Endothelial cell of umbilical vein (primary cell): ENCODE measurements at regions of chr5 and their contacts with region 1.

Region 1: DNA sequence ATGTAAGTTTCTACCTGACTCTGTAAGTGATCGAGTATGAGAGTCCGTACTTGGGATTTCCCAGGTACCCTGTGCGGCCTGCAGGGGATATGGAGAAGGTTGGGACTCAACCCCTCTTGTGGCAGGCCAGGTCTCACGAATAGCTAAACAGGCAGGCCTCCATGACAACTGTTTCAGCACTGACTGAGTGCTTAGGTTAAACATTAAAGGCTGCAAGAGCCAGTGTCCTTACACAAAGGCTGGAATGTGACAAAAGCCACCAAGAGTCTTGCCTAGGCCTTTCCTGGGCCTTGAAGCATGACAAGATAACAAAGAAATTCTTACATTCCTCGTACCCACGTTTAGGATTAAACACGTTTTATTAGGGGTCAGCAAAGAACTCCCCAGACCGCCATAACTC is 58.6 kb downstream of the THBS4 start:
- DNase-seq: no peak
- H3K4me3 ChIP-seq: no peak overlapping the region
- H3K27ac ChIP-seq: no peak overlapping the region
- H3K4me1 ChIP-seq: no peaks in the 10 kb centered on the region
- H3K27me3 ChIP-seq: no peaks in the 10 kb centered on the region
- CTCF ChIP-seq: no peak
- POLR2A ChIP-seq: no peak

Region 2: DNA sequence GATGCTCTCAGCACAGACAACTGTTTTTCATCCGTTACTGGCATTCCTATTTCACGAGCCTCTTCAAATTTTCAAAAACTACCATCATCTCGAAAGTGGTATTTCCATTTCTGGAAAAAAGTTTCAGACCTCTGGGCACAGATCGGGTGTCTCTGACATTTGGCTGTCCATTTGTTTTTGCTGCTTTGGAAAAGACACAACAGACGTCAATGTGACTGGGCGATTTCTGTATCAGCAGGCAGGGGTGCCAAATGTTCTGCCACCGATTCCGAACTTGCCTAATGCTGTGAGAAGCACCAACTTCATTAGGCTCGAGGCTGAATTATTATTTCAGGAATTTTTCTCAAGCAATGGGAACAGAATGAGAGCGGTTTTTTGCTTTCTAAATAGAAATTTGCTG is 1214.3 kb before region 1 on chr5:
- CTCF ChIA-PET with region 1: no interaction called
- POLR2A ChIA-PET with region 1: no interaction called
- dilution Hi-C with region 1: no loop called
- intact Hi-C with region 1: no loop called
- DNase-seq: no peak
- H3K4me3 ChIP-seq: no peak overlapping the region
- H3K27ac ChIP-seq: no peak overlapping the region
- H3K4me1 ChIP-seq: no peaks in the 10 kb centered on the region
- H3K27me3 ChIP-seq: no peaks in the 10 kb centered on the region
- CTCF ChIP-seq: no peak
- POLR2A ChIP-seq: no peak

Region 3: DNA sequence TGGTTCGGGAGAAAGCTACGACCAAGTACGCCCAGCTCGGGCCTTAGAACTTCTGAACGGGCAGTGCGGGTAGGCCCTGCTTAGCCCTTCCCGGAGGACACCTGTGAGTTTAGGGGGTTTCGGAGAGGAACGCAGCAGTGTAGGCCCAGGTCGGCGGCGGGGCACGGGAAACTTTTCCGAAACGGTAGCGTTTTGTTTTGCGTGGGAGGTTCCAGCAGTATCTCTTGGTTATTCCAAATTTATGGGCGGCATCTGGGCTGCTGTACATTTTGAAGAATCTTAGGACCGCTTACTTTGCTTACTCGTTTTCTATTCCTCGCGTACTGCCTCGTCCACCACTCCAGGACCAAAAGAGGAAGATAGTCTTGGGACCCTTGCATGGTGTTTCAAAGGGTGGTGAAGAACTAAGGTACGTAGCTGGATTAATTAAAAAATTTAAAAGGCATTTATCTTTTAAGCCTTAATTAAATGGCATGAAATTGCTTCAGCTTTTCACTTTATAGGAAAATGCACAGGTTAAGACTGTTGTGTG is 481.1 kb before region 1 on chr5:
- CTCF ChIA-PET with region 1: no interaction called
- POLR2A ChIA-PET with region 1: no interaction called
- dilution Hi-C with region 1: no loop called
- intact Hi-C with region 1: no loop called
- DNase-seq: no peak
- H3K4me3 ChIP-seq: peak overlapping the region; percentile 70 to 95 (median 95)
- H3K27ac ChIP-seq: peak overlapping the region; percentile 64
- H3K4me1 ChIP-seq: peaks cover 5% of the 10 kb centered on the region
- H3K27me3 ChIP-seq: no peaks in the 10 kb centered on the region
- CTCF ChIP-seq: peak in 1 of 2 donors; percentile 1
- POLR2A ChIP-seq: no peak

Region 4: GRCh38 chr5:79712741-79713140 is 381.1 kb before region 1 on chr5:
- CTCF ChIA-PET with region 1: no interaction called
- POLR2A ChIA-PET with region 1: no interaction called
- dilution Hi-C with region 1: no loop called
- intact Hi-C with region 1: no loop called
- DNase-seq: no peak
- H3K4me3 ChIP-seq: no peak overlapping the region
- H3K27ac ChIP-seq: no peak overlapping the region
- H3K4me1 ChIP-seq: no peaks in the 10 kb centered on the region
- H3K27me3 ChIP-seq: no peaks in the 10 kb centered on the region
- CTCF ChIP-seq: no peak
- POLR2A ChIP-seq: no peak

Region 5: DNA sequence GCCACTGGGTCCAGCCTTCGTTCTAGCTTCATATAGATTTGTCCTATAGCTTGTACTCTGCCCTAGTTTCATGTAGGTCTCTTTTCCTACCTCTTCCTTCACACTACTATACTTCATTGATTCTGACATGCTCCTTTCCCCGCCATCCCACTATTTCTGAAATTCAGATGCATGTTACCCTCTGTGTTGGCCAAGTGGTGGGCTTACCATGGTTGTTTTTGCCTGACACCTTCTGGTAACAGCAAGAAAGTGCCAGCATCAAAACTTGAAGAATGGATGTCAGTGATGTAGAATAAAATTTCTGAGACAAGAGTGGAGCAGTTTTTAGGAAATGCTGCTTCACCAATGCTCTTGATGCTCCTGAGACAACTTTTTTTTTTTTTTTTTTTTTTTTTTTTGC is 181.6 kb after region 1 on chr5:
- CTCF ChIA-PET with region 1: interaction called, 41 read pairs
- POLR2A ChIA-PET with region 1: no interaction called
- dilution Hi-C with region 1: no loop called
- intact Hi-C with region 1: loop called (anchors 1 kb)
- DNase-seq: peak; percentile 21
- H3K4me3 ChIP-seq: no peak overlapping the region
- H3K27ac ChIP-seq: no peak overlapping the region
- H3K4me1 ChIP-seq: no peaks in the 10 kb centered on the region
- H3K27me3 ChIP-seq: no peaks in the 10 kb centered on the region
- CTCF ChIP-seq: peak; percentile 4 to 42
- POLR2A ChIP-seq: no peak

Region 6: DNA sequence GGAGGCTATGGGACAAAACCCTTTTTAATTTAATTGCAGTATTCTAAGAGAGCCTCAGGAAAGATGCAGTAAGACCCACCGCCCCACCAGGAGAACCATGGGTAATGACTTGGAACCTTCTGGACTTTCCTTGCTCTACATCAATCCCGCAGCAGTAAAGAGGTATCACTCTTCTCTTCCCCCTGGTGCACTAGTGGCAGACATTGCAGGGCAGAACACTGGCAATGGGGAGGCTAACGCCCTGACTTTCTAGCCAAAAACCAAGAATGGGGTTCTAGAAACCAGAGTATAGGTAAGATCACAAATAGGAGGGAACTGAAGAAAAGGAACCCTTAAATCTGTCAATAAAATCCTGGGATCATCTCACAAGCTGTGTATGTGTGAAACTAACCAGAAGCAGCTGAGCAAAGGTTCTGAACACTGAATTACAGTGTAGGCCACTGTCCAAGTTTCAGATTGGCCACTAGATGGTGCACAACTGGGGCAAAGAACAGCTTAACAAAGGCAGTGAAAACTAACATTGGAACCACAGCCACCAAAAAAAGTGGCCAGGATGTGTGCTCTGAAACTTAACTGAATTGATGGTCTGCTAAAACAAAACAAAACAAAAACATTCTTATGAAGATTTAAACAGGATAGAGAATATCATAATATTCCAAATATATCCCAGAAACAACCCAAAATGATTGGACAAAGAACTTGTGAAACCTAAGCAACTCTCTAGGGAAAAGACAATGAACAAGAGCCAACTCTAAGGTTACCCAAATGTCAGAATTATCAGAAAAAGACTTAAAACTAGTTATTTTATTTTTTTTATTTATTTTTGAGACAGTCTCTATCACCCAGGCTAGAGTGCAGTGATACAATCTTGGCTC is 387.5 kb after region 1 on chr5:
- CTCF ChIA-PET with region 1: interaction called, 8 read pairs
- POLR2A ChIA-PET with region 1: no interaction called
- dilution Hi-C with region 1: no loop called
- intact Hi-C with region 1: loop called (anchors 2 kb)
- DNase-seq: peak; percentile 59
- H3K4me3 ChIP-seq: no peak overlapping the region
- H3K27ac ChIP-seq: no peak overlapping the region
- H3K4me1 ChIP-seq: no peaks in the 10 kb centered on the region
- H3K27me3 ChIP-seq: no peaks in the 10 kb centered on the region
- CTCF ChIP-seq: peak; percentile 81 to 85
- POLR2A ChIP-seq: no peak

Region 7: GRCh38 chr5:80672140-80672736 is 578.4 kb after region 1 on chr5:
- CTCF ChIA-PET with region 1: interaction called, 42 read pairs
- POLR2A ChIA-PET with region 1: no interaction called
- dilution Hi-C with region 1: no loop called
- intact Hi-C with region 1: loop called (anchors 1 kb)
- DNase-seq: peak; percentile 69
- H3K4me3 ChIP-seq: no peak overlapping the region
- H3K27ac ChIP-seq: no peak overlapping the region
- H3K4me1 ChIP-seq: no peaks in the 10 kb centered on the region
- H3K27me3 ChIP-seq: no peaks in the 10 kb centered on the region
- CTCF ChIP-seq: peak; percentile 70
- POLR2A ChIP-seq: no peak